Activated T-helper 2 cell treated with anti-CD3 and anti-CD28 coated beads, Interferon-gamma antibody, Interleukin-2, Interleukin-4, amounts not matched to agents 10 μg/mL and 5 μg/mL and 100 μg/mL, durations not matched to agents 14 hours and 24 hours and 36 hours (primary cell): ENCODE measurements at regions of chr7 and their contacts with region 1.

Region 1: GRCh38 chr7:151244196-151244840 is 4.2 kb downstream of the SMARCD3 start:
- DNase-seq: peak; percentile 48
- H3K4me3 Mint-ChIP-seq: peak overlapping the region; percentile 30
- H3K27ac Mint-ChIP-seq: no peak overlapping the region
- H3K4me1 Mint-ChIP-seq: peaks cover 24% of the 10 kb centered on the region
- H3K27me3 Mint-ChIP-seq: peaks cover 35% of the 10 kb centered on the region

Region 2: DNA sequence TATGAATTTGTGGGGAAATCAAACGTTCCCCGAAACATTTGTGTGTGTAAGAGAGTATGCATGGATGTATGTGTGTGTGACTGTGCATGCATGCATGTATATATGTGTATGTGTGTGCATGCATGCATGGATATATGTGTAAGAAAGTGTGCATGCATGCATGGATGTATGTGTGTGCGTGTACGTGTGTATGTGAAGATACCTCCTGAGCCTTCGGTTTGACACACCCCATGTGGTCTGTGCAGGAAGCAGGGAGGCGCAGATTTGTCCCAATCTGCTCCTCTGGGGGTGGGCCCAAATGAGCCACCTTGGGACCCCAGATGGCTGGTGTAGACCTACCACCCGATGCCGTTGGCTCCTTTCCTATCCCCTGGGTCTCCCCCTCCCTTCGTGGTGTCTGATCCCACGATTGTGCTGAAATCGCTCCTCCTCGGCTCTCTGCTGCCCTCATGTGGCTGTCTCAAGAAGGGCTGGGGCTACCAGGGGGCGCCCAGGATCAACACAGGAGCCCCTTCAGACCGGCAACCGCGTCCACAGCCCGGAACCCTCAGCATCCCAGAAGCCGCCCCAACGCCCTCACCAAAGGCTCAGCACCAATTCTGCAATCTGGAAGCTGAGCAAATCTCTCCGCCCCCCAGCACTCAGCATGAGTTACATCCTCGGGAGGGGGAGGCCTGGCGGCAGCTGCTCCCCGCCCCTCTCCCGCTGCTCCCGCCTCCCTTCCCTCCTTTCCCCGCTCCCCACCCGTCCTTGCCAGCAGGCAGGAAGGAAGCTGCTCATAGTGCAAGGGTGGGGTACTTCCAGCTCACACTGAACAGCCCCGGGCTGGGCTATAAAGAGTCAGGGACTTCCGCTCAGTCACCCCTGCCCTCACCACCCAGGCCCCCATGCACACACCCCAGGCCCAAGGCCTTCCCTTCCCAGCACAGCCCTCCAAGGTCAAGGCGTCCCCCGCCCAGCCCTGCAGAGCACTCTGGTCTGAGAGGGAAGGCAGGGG is 255.8 kb before region 1 on chr7:
- intact Hi-C with region 1: no loop called
- DNase-seq: peak; percentile 55
- H3K4me3 Mint-ChIP-seq: peak overlapping the region; percentile 14
- H3K27ac Mint-ChIP-seq: no peak overlapping the region
- H3K4me1 Mint-ChIP-seq: peaks cover 12% of the 10 kb centered on the region
- H3K27me3 Mint-ChIP-seq: peaks cover 30% of the 10 kb centered on the region

Region 3: DNA sequence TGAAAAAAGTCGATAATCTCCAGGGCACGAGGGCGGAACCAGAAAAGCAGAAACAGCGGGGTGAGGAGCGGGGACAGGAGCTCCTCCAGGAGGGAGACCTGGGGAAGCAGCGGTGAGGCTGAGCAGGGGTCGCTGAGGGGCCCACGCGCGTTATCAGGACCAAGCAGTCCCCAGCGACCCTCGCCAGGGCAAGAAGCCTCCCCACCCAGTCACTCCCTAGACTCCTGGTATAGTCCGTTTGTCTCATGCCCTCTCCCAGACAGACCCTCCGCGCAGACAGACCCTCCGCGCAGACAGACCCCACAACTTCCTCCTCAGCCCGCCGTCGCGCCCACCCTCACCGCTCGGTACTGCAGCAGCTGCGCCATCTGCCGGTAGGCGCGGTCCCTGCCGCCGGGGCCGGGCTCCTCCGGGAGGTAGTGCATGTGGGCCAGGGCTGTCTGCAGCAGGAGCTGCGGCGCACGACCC is 226.3 kb before region 1 on chr7:
- intact Hi-C with region 1: loop called (anchors 5 kb)
- DNase-seq: peak; percentile 70
- H3K4me3 Mint-ChIP-seq: peak overlapping the region; percentile 76
- H3K27ac Mint-ChIP-seq: peak overlapping the region; percentile 42
- H3K4me1 Mint-ChIP-seq: peaks cover 37% of the 10 kb centered on the region
- H3K27me3 Mint-ChIP-seq: peaks cover 31% of the 10 kb centered on the region

Region 4: GRCh38 chr7:151152643-151153513 is 91.4 kb before region 1 on chr7:
- intact Hi-C with region 1: no loop called
- DNase-seq: no peak
- H3K4me3 Mint-ChIP-seq: no peak overlapping the region
- H3K27ac Mint-ChIP-seq: no peak overlapping the region
- H3K4me1 Mint-ChIP-seq: no peaks in the 10 kb centered on the region
- H3K27me3 Mint-ChIP-seq: peaks cover 36% of the 10 kb centered on the region

Region 5: DNA sequence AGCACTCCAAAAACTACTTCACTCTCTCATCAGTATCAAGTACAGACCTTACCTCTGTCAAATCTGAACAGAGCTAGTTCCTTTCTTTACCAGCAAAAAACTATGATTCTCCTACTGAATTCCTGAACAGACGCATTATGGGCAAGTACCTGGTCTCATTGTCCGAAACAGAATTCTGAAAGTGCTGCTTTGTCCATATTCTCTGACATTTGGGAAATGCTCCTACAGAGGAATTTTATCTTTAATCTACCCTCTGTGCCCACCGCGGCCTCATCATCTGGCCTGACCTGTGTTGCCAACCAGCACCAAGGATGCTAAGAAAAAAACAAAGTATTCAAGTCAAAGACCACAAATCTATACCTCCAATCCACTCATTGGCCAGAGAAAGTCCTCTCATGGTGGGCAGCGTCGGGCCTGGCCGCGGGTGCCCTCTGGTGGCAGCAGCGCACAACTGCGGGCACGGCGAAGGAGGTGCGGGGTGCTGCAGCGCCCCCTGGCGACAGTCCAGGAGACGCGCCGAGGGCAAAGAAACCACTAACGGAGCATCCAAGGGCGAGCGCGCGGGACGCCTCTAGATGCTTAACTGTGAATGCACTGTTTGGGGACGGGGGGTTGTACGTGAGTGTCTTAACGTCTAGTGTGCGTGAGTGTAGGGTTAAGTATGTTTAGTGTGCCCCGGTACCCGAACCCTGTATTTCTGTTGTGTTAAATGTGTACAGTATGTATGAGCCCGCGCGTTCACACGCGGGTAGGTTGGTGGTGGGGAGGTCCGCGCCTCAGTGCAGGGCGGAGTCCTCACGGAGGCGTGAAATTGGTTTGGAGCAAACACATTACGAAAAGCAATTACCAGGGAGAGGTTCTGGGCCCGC is 71.8 kb before region 1 on chr7:
- intact Hi-C with region 1: loop called (anchors 5 kb)
- DNase-seq: peak; percentile 72
- H3K4me3 Mint-ChIP-seq: no peak overlapping the region
- H3K27ac Mint-ChIP-seq: no peak overlapping the region
- H3K4me1 Mint-ChIP-seq: peaks cover 9% of the 10 kb centered on the region
- H3K27me3 Mint-ChIP-seq: peaks cover 47% of the 10 kb centered on the region

Region 6: GRCh38 chr7:151232091-151232916 is 12.0 kb before region 1 on chr7 and contains the start of gene CHPF2:
- intact Hi-C with region 1: loop called (anchors 1 kb)
- DNase-seq: peak; percentile 89
- H3K4me3 Mint-ChIP-seq: peak within 1 kb of the TSS; percentile 100
- H3K27ac Mint-ChIP-seq: peak within 1 kb of the TSS; percentile 99
- H3K4me1 Mint-ChIP-seq: peaks cover 23% of the 10 kb centered on the region
- H3K27me3 Mint-ChIP-seq: peaks cover 4% of the 10 kb centered on the region
- total RNA-seq, gene CHPF2: 43.8 and 46.0 TPM in 2 replicates

Region 7: GRCh38 chr7:151304856-151305255 is 60.5 kb after region 1 on chr7:
- intact Hi-C with region 1: loop called (anchors 1 kb)
- DNase-seq: no peak
- H3K4me3 Mint-ChIP-seq: peak overlapping the region; percentile 47
- H3K27ac Mint-ChIP-seq: no peak overlapping the region
- H3K4me1 Mint-ChIP-seq: peaks cover 15% of the 10 kb centered on the region
- H3K27me3 Mint-ChIP-seq: peaks cover 31% of the 10 kb centered on the region